Heart left ventricle (tissue), 16 donors: ENCODE measurements at regions of chr16 and their contacts with region 1.

Region 1: GRCh38 chr16:28924732-28925385 is at the start of gene RABEP2:
- DNase-seq: peak; percentile 93 to 98 (median 93)
- ATAC-seq: peak; percentile 84 to 94 (median 94)
- H3K4me3 ChIP-seq: peak within 1 kb of the TSS; percentile 62 to 95 (median 83)
- H3K27ac ChIP-seq: peak within 1 kb of the TSS; percentile 87 to 100 (median 99)
- H3K4me1 ChIP-seq: peaks cover 0 to 14% (median 8%) of the 10 kb centered on the region in 12 donors
- H3K27me3 ChIP-seq: no peaks in the 10 kb centered on the region
- CTCF ChIP-seq: no peak
- POLR2A ChIP-seq: peak in 1 of 2 donors; percentile 27
- total RNA-seq, gene RABEP2: 10.2 to 22.3 (median 14.7) TPM

Region 2: GRCh38 chr16:28823872-28824716 is 100.8 kb before region 1 on chr16:
- intact Hi-C with region 1: loop called in 1 of 10 experiments (anchors 5 kb)
- DNase-seq: peak; percentile 98 to 99 (median 98)
- ATAC-seq: peak; percentile 92 to 97 (median 96)
- H3K4me3 ChIP-seq: peak overlapping the region; percentile 72 to 100 (median 99)
- H3K27ac ChIP-seq: peak overlapping the region; percentile 90 to 100 (median 99)
- H3K4me1 ChIP-seq: peaks cover 0 to 33% (median 21%) of the 10 kb centered on the region in 12 donors
- H3K27me3 ChIP-seq: no peaks in the 10 kb centered on the region
- CTCF ChIP-seq: peak in 11 of 12 donors; percentile 6 to 51 (median 31)
- POLR2A ChIP-seq: peak in 1 of 2 donors; percentile 53

Region 3: DNA sequence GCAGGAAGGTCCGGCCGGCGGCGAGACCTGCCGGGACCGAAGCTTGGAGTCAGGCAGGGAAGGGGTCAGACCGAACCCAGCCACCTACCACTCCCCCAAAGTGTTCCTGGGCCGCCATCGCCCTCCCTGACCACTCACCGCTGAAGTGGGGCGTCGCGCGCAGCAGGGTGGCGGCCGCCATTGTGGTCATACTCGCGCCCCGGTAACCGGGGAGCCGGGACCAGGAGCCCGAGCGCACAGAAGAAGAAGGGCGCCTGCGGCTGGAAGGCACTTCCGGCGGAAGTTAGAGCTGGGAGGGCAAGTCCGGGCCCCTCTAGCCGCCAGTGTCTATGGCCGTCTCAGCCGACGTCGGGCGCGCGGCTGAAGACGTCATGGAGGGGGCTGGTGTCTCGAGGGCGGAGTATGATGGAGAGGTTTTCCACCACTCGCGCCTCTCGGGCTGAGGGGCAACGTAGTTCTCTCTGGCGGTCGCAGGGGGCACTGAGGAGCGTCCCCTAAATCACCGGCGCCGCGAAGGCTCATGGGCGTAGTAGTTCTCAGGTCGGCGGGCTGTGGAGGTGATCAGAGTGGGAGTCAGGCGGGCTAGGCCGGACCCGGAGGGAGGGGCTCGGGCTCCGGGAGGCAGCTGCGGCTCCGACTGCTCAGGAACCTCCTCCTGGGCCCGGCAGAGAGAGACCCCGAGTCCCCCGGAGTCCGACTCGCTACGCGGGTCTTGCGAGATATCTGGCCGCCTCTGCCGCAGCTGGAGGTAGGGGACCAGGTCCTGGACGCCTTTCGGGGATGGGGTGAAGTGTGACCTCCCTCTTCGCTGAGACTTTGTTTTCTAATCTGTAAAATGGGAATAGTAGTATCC is 78.6 kb before region 1 on chr16 and contains the start of gene TUFM:
- intact Hi-C with region 1: loop called in 1 of 10 experiments (anchors 1 kb)
- DNase-seq: peak; percentile 99
- ATAC-seq: peak; percentile 97 to 99 (median 98)
- H3K4me3 ChIP-seq: peak within 1 kb of the TSS; percentile 63 to 100 (median 85)
- H3K27ac ChIP-seq: peak within 1 kb of the TSS; percentile 73 to 96 (median 90)
- H3K4me1 ChIP-seq: peaks cover 0 to 25% (median 18%) of the 10 kb centered on the region in 12 donors
- H3K27me3 ChIP-seq: no peaks in the 10 kb centered on the region
- CTCF ChIP-seq: peak; percentile 57 to 92 (median 69)
- POLR2A ChIP-seq: peak in 1 of 2 donors; percentile 76
- total RNA-seq, gene TUFM: 179 to 250 (median 225) TPM

Region 4: DNA sequence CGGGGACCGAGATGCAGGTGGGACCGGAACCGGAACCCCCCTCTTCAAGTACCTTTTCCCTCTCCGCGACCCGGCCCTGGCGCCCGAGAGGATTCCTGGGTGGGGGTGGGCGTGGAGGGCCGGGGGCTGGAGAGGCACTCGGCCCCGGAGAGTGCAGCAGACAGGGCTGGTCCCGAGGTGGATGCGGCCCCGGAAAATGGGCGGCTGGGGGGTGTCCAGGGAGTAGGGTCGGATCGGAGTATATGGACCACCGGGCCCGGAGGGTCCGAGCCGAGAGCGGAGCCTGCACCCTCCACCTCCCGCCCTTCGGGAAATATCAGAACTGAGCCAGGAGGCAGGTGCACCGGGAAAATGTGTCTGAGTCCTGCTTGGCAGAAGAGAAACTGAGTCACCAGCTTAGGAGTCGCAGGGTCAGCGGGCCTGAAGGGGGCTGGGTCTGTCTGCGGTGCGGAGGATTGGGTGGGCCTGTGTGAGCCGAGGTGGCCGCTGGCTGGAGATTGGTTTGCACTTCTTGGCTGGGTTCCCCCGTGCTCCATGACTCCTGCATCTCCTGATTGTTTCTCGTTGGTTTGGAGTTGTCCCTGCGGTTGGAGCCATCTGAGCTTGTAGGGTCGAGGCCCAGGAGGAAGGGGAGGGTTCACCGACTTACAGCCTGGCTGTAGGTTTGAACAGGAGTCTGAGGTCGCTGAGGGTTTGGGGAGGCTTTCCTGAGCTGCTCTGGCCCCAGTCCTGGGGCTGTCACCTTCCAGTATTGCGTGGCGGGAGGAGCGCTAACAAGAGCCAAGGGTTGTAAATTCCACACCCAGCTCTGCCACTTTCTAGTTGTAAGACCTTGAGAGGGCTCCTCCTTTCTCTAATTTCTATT is 60.7 kb before region 1 on chr16:
- intact Hi-C with region 1: loop called in 4 of 10 experiments (anchors 1 to 10 kb)
- DNase-seq: peak in 2 of 5 donors; percentile 35 to 39
- ATAC-seq: peak in 2 of 4 donors; percentile 13 to 27
- H3K4me3 ChIP-seq: peak overlapping the region; percentile 68 to 100 (median 92)
- H3K27ac ChIP-seq: peak overlapping the region; percentile 91 to 99 (median 98)
- H3K4me1 ChIP-seq: peaks cover 0 to 32% (median 19%) of the 10 kb centered on the region in 12 donors
- H3K27me3 ChIP-seq: no peaks in the 10 kb centered on the region
- CTCF ChIP-seq: no peak
- POLR2A ChIP-seq: no peak

Region 5: GRCh38 chr16:28879841-28880588 is 44.8 kb before region 1 on chr16:
- intact Hi-C with region 1: loop called in 2 of 10 experiments (anchors 5 kb)
- DNase-seq: peak; percentile 88 to 93 (median 89)
- ATAC-seq: peak; percentile 61 to 96 (median 94)
- H3K4me3 ChIP-seq: peak overlapping the region; percentile 29 to 92 (median 69)
- H3K27ac ChIP-seq: peak overlapping the region in 4 of 12 donors; percentile 24 to 56 (median 34)
- H3K4me1 ChIP-seq: peaks cover 4 to 16% (median 11%) of the 10 kb centered on the region in 12 donors
- H3K27me3 ChIP-seq: peaks cover 0 to 10% (median 0%) of the 10 kb centered on the region in 9 donors
- CTCF ChIP-seq: peak in 5 of 12 donors; percentile 7 to 40 (median 16)
- POLR2A ChIP-seq: peak in 1 of 2 donors; percentile 43

Region 6: DNA sequence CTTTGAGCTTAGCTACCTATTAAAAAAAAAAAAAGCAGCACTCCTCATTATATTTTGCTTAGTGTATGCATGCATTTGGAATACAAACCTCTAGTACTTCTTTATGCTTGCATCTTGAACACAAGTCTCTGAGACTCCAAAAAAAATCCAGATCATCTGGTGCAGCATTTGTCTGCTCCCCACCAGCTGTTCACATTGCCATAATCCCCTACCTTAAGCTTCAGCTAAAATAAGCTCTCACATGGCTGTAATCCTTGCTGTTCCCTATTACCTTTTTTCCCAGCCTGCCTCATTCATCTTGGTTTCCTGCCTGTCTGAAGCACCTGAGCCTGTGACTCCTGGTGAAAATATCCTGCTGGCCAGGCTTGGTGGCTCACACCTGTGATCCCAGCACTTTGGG is 18.4 kb after region 1 on chr16:
- intact Hi-C with region 1: loop called in 3 of 10 experiments (anchors 1 to 2 kb)
- DNase-seq: no peak
- ATAC-seq: no peak
- H3K4me3 ChIP-seq: no peak overlapping the region
- H3K27ac ChIP-seq: no peak overlapping the region
- H3K4me1 ChIP-seq: peaks cover 0 to 14% (median 6%) of the 10 kb centered on the region in 12 donors
- H3K27me3 ChIP-seq: no peaks in the 10 kb centered on the region
- CTCF ChIP-seq: no peak
- POLR2A ChIP-seq: no peak

Region 7: GRCh38 chr16:28950648-28951409 is 26.0 kb after region 1 on chr16 and contains the start of gene NFATC2IP:
- intact Hi-C with region 1: loop called in 1 of 10 experiments (anchors 1 kb)
- DNase-seq: peak; percentile 100
- ATAC-seq: peak; percentile 98 to 100 (median 99)
- H3K4me3 ChIP-seq: peak within 1 kb of the TSS; percentile 77 to 100 (median 90)
- H3K27ac ChIP-seq: peak within 1 kb of the TSS; percentile 79 to 94 (median 84)
- H3K4me1 ChIP-seq: peaks cover 0 to 24% (median 12%) of the 10 kb centered on the region in 12 donors
- H3K27me3 ChIP-seq: no peaks in the 10 kb centered on the region
- CTCF ChIP-seq: no peak
- POLR2A ChIP-seq: peak in 1 of 2 donors; percentile 41
- total RNA-seq, gene NFATC2IP: 11.1 to 25.3 (median 19.5) TPM